Activated B cell treated with CpG ODN at 0.5 μM for 24 hours (primary cell): ENCODE measurements at regions of chr14 and their contacts with region 1.

Region 1: GRCh38 chr14:49892636-49893308 is at the start of gene ARF6:
- DNase-seq: peak; percentile 98
- ATAC-seq: peak; percentile 85
- H3K4me3 Mint-ChIP-seq: peak within 1 kb of the TSS; percentile 96
- H3K27ac Mint-ChIP-seq: peak within 1 kb of the TSS; percentile 98
- H3K4me1 Mint-ChIP-seq: peaks cover 38% of the 10 kb centered on the region
- H3K27me3 Mint-ChIP-seq: no peaks in the 10 kb centered on the region
- CTCF ChIP-seq: no peak
- total RNA-seq, gene ARF6: 136 and 142 TPM in 2 replicates

Region 2: DNA sequence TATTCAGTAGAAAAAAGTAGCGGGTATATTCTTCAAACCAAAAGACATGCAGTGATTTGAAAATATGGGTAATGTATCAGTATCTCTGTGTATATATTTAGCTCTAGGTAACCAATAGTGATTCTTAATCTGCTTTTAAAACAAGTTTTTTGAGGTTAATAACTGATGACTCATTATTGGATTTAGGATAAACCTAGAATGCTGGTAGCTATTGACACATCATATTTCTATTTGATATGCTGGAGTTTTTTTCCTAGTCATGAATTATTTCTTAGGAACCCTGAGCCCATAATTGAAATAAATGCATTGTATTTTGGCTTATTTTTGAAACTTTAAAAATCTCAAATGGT is 15.6 kb after region 1 on chr14:
- CTCF ChIA-PET with region 1: no interaction called
- POLR2A ChIA-PET with region 1: interaction called, 13 read pairs
- intact Hi-C with region 1: loop called (anchors 1 kb)
- DNase-seq: no peak
- ATAC-seq: no peak
- H3K4me3 Mint-ChIP-seq: no peak overlapping the region
- H3K27ac Mint-ChIP-seq: peak overlapping the region; percentile 24
- H3K4me1 Mint-ChIP-seq: peaks cover 37% of the 10 kb centered on the region
- H3K27me3 Mint-ChIP-seq: no peaks in the 10 kb centered on the region
- CTCF ChIP-seq: no peak

Region 3: GRCh38 chr14:49946320-49947141 is 53.8 kb after region 1 on chr14:
- CTCF ChIA-PET with region 1: no interaction called
- POLR2A ChIA-PET with region 1: interaction called, 10 read pairs
- intact Hi-C with region 1: no loop called
- DNase-seq: no peak
- ATAC-seq: no peak
- H3K4me3 Mint-ChIP-seq: no peak overlapping the region
- H3K27ac Mint-ChIP-seq: no peak overlapping the region
- H3K4me1 Mint-ChIP-seq: peaks cover 36% of the 10 kb centered on the region
- H3K27me3 Mint-ChIP-seq: no peaks in the 10 kb centered on the region
- CTCF ChIP-seq: no peak

Region 4: GRCh38 chr14:49992901-49993335 is 100.1 kb after region 1 on chr14:
- CTCF ChIA-PET with region 1: interaction called, 4 read pairs
- POLR2A ChIA-PET with region 1: interaction called, 11 read pairs
- intact Hi-C with region 1: no loop called
- DNase-seq: no peak
- ATAC-seq: peak; percentile 88
- H3K4me3 Mint-ChIP-seq: peak overlapping the region; percentile 73
- H3K27ac Mint-ChIP-seq: peak overlapping the region; percentile 90
- H3K4me1 Mint-ChIP-seq: peaks cover 36% of the 10 kb centered on the region
- H3K27me3 Mint-ChIP-seq: no peaks in the 10 kb centered on the region
- CTCF ChIP-seq: no peak

Region 5: GRCh38 chr14:50060871-50061663 is 168.3 kb after region 1 on chr14:
- CTCF ChIA-PET with region 1: interaction called, 5 read pairs
- POLR2A ChIA-PET with region 1: interaction called, 79 read pairs
- intact Hi-C with region 1: loop called (anchors 1 kb)
- DNase-seq: no peak
- ATAC-seq: peak; percentile 0
- H3K4me3 Mint-ChIP-seq: peak overlapping the region; percentile 87
- H3K27ac Mint-ChIP-seq: peak overlapping the region; percentile 100
- H3K4me1 Mint-ChIP-seq: peaks cover 88% of the 10 kb centered on the region
- H3K27me3 Mint-ChIP-seq: no peaks in the 10 kb centered on the region
- CTCF ChIP-seq: no peak

Region 6: DNA sequence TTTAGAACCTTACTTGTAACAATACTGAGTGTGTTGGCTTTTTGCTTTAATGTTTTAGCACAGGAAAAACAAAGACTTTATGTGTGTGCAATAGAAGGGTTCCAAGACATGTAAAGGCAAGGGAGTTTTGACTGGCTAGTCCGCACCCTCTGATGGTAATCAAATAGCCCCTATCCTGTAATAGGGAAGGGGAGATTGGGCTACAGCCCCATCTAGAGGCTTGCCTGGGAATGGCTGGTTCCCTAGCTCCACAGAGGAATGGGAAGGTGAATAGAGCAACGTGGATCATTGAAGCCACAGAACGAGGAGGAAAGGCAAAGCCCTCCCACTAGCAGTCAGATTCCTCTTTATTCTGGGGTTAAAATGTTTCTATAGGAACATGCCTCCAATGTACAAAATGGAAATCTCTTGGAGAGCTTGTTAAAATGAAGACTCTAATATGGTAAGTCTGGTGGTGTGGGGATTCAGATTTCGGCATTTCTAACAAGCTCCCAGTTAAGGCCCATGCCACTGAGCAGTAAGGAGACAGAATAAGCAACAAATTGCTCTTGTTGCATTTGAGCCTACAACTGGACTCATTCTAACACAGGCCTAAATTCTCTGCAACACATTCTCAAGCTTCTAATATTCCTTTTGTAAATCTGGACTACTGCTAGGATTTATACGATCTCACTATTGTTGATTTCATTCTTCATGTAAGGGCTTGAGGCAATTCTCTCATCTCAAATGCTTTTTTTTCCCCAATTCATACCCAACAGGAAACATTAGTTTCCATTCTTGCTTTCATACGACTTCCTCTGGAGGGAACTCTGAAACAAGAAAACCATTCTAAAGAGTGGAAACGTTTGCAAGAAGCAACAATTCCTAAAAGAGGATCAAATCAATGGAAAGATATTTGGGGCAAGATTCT is 881.1 kb after region 1 on chr14:
- CTCF ChIA-PET with region 1: no interaction called
- POLR2A ChIA-PET with region 1: no interaction called
- intact Hi-C with region 1: no loop called
- DNase-seq: no peak
- ATAC-seq: peak; percentile 67
- H3K4me3 Mint-ChIP-seq: no peak overlapping the region
- H3K27ac Mint-ChIP-seq: no peak overlapping the region
- H3K4me1 Mint-ChIP-seq: peaks cover 17% of the 10 kb centered on the region
- H3K27me3 Mint-ChIP-seq: no peaks in the 10 kb centered on the region
- CTCF ChIP-seq: no peak